Natural killer cell (primary cell): ENCODE measurements at regions of chr6 and their contacts with region 1.

Region 1: DNA sequence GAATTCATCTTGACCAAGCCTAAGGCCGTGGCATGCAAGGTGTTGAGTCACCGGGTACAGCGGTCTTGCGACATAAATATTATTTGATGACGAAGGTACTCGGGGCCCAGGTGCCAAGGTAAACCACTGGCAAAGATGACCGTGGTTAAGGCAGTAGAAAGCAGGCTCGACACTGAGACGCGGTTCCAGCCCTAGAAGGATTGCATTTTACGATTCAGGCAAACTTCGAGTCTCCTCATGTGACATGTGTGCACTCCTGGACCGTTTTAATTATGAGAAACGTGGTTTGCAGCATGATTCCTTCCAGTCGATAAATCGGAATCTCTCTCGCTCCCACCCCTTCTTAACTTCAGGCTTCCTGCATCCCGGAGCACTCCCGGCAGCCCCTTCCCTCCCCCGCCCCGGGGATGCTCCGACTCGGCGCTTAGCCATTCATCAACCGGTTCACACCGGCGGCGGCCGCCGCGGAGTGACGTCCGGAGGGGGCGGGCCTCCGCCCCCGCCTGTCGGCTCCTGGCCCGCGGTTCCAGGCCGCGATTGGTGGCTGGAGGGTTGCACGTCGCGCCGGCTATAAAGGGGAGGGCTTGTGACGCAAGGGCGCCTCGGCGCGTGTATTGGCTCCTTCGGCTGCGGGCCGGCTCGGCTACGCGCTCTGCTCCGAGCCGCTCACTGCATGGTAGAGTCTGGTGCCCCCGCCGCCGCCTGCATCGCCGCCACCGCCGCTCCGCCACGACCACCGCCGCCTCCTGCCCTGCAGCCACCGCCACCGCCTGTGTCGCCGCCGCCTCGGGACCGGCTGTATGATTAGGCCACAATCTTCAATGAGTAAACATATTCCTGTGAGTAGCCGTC is at the starts of genes LOC128125822 and PTP4A1:
- DNase-seq: peak; percentile 96 to 99
- ATAC-seq: peak; percentile 83 to 95 (median 87)
- H3K4me3 ChIP-seq: peak within 1 kb of the TSS; percentile 91
- H3K4me3 Mint-ChIP-seq: peak within 1 kb of the TSS; percentile 96
- H3K27ac ChIP-seq: peak within 1 kb of the TSS; percentile 99
- H3K27ac Mint-ChIP-seq: peak within 1 kb of the TSS; percentile 96 to 98
- H3K4me1 ChIP-seq: peaks cover 12% of the 10 kb centered on the region
- H3K4me1 Mint-ChIP-seq: peaks cover 29% of the 10 kb centered on the region in 2 donors
- H3K27me3 ChIP-seq: no peaks in the 10 kb centered on the region
- H3K27me3 Mint-ChIP-seq: peaks cover 0 to 3% of the 10 kb centered on the region in 2 donors
- CTCF ChIP-seq: no peak
- total RNA-seq, gene PTP4A1: 113 to 185 (median 130) TPM

Region 2: GRCh38 chr6:63352587-63353285 is 219.4 kb before region 1 on chr6:
- intact Hi-C with region 1: loop called (anchors 10 kb)
- DNase-seq: peak in 1 of 2 donors; percentile 9
- ATAC-seq: peak; percentile 68 to 85 (median 70)
- H3K4me3 ChIP-seq: no peak overlapping the region
- H3K4me3 Mint-ChIP-seq: peak overlapping the region; percentile 55
- H3K27ac ChIP-seq: no peak overlapping the region
- H3K27ac Mint-ChIP-seq: peak overlapping the region; percentile 77 to 81
- H3K4me1 ChIP-seq: peaks cover 5% of the 10 kb centered on the region
- H3K4me1 Mint-ChIP-seq: peaks cover 15 to 20% of the 10 kb centered on the region in 2 donors
- H3K27me3 ChIP-seq: no peaks in the 10 kb centered on the region
- H3K27me3 Mint-ChIP-seq: no peaks in the 10 kb centered on the region
- CTCF ChIP-seq: no peak

Region 3: DNA sequence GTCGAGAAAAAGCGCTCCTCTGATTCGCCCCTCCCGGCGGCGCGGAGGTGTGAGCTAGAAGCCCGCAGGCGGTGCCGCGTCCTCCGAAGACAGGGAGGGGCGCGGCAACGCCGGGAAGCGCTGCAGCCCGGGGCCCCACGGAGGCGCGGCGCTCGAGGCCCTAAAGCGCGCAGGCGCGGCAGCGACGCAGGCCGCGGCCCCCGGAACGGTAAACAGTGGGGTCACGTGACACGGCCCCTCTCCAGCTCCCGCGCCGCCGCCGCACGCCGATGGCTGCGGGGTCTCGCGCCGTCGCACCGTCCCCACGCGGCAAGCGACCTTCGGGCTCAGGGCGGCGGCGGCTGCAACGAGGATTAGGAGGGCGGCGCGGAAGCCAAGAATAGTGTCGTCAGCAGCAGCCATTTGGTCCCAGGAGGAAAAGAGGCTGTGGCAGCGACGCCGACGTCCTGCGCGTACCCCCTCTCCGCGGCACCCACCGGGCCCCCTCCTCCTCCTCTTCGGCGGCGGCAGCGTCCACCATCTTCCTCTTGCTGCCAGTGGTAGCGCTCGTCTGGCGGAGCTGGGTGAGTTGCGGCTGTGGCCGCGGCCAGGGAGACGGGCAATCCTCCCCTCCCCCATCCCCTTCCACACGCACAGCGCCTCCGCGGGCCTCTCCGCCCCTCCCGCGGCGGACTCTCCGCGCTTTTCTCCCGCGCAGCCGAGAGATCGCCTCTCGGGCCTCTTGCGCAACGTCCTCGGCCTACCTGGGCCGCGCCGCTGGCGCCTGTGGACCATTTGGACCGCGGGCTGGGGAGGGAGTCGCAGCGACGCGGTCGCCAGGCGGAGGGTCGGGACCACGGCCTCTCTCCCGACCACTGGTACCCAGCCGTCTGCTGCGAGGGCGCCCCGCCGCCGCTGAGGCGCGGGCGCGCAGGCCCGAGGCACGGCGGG is 63.7 kb after region 1 on chr6 and contains the start of gene PHF3:
- intact Hi-C with region 1: loop called (anchors 1 kb)
- DNase-seq: peak; percentile 85 to 98
- ATAC-seq: peak; percentile 86 to 94 (median 86)
- H3K4me3 ChIP-seq: peak within 1 kb of the TSS; percentile 100
- H3K4me3 Mint-ChIP-seq: peak within 1 kb of the TSS; percentile 99
- H3K27ac ChIP-seq: peak within 1 kb of the TSS; percentile 98
- H3K27ac Mint-ChIP-seq: peak within 1 kb of the TSS; percentile 96 to 98
- H3K4me1 ChIP-seq: peaks cover 7% of the 10 kb centered on the region
- H3K4me1 Mint-ChIP-seq: peaks cover 49 to 55% of the 10 kb centered on the region in 2 donors
- H3K27me3 ChIP-seq: no peaks in the 10 kb centered on the region
- H3K27me3 Mint-ChIP-seq: peaks cover 4 to 7% of the 10 kb centered on the region in 2 donors
- CTCF ChIP-seq: no peak
- total RNA-seq, gene PHF3: 80.2 to 84.4 (median 84.0) TPM